HEK293T (cell line): ENCODE measurements at regions of chr14 and their contacts with region 1.

Region 1: GRCh38 chr14:60091550-60092530 is at the start of gene PCNX4:
- DNase-seq: peak; percentile 89

Region 2: GRCh38 chr14:60025571-60025970 is 66.3 kb before region 1 on chr14:
- CTCF ChIA-PET with region 1: no interaction called
- POLR2A ChIA-PET with region 1: no interaction called
- DNase-seq: no peak

Region 3: GRCh38 chr14:60064491-60065072 is 27.3 kb before region 1 on chr14:
- CTCF ChIA-PET with region 1: no interaction called
- POLR2A ChIA-PET with region 1: no interaction called
- DNase-seq: peak; percentile 10

Region 4: DNA sequence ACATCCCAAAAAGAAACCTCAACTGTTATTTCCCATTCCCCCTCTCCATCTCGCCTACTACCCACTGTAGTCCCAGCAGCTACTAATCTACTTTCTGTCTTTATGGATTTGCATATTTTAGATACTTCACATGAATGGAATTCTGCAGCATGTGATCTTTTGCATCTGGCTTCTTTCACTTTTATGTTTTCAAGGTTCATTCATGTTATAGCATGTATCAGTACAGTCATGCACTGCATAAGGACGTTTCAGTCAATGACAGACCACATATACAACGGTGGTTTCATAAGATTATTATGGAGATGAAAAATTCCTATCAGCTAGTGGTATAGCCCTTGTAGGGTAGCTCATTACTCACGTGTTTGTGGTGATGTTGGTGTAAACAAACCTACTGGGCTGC is 24.3 kb after region 1 on chr14:
- CTCF ChIA-PET with region 1: no interaction called
- POLR2A ChIA-PET with region 1: no interaction called
- DNase-seq: no peak

Region 5: GRCh38 chr14:60133487-60133886 is 41.6 kb after region 1 on chr14:
- CTCF ChIA-PET with region 1: no interaction called
- POLR2A ChIA-PET with region 1: no interaction called
- DNase-seq: no peak

Region 6: GRCh38 chr14:60164712-60165546 is 73.1 kb after region 1 on chr14 and contains the start of gene DHRS7:
- CTCF ChIA-PET with region 1: no interaction called
- POLR2A ChIA-PET with region 1: interaction called, 14 read pairs
- DNase-seq: peak; percentile 83